ENCODE measurements at regions of chr20 and their contacts with region 1.

Region 1: GRCh38 chr20:6767536-6768227 is at the start of gene BMP2:
- DNase-seq: peak; percentile 69
- H3K4me3 ChIP-seq: peak within 1 kb of the TSS; percentile 78 to 93 (median 78)
- H3K27ac ChIP-seq: peak within 1 kb of the TSS; percentile 56
- H3K4me1 ChIP-seq: peaks cover 11% of the 10 kb centered on the region
- H3K27me3 ChIP-seq: no peaks in the 10 kb centered on the region
- CTCF ChIP-seq: no peak
- total RNA-seq, gene BMP2: 2.0 to 11.8 TPM

Region 2: GRCh38 chr20:5779071-5779900 is 988.4 kb before region 1 on chr20:
- CTCF ChIA-PET with region 1: no interaction called
- dilution Hi-C with region 1: no loop called
- in situ Hi-C with region 1: no loop called
- intact Hi-C with region 1: loop called (anchors 10 kb)
- DNase-seq: peak; percentile 44
- H3K4me3 ChIP-seq: no peak overlapping the region
- H3K27ac ChIP-seq: no peak overlapping the region
- H3K4me1 ChIP-seq: no peaks in the 10 kb centered on the region
- H3K27me3 ChIP-seq: no peaks in the 10 kb centered on the region
- CTCF ChIP-seq: no peak

Region 3: GRCh38 chr20:6178537-6178936 is 589.1 kb before region 1 on chr20:
- CTCF ChIA-PET with region 1: no interaction called
- dilution Hi-C with region 1: no loop called
- in situ Hi-C with region 1: no loop called
- intact Hi-C with region 1: loop called (anchors 10 kb)
- DNase-seq: peak; percentile 32
- H3K4me3 ChIP-seq: no peak overlapping the region
- H3K27ac ChIP-seq: no peak overlapping the region
- H3K4me1 ChIP-seq: no peaks in the 10 kb centered on the region
- H3K27me3 ChIP-seq: peaks cover 3% of the 10 kb centered on the region
- CTCF ChIP-seq: peak; percentile 36 to 64

Region 4: DNA sequence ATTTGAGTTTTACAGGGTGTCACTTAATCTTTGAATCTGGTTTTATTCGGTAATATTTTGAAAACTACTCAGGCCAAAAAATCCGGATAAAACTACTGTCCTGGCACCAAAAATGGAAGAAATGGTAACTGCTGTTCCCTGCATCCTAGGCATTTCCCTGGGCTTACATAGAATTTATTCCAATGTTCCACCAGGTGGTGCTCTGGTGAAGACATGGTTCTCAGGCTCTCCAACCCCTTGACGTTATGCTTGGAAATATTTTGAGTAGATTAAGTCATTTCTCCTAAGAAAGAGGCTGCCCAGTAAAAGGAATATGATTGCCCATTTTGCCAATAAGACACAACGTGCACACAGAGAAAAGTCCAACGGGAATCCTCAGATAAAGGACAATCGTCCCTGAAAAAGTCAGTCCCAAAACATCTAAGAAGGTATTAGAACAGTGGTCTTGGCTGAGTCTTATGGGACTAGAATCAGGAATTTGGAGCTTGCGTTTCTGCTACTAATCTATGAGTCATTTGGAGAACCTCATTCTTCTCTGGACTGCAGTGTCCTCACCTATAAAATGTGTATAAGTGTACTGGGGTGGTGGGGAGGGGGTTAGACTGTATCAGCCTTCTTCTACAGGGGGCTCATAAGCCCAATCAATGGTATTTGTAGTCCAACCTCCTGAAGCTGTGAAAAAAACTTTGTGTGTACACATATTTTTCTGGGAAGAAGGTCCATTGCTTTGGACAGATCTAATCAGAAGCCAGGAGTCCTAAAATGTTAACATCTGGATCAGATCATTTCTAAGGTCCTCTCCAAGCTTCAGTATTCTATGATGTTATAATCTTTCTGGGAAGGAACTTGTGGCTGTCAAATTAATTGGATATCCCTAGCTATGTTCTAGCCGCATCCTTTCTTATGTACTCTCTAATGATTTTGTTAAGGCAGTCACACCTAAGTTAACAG is 131.2 kb before region 1 on chr20:
- CTCF ChIA-PET with region 1: no interaction called
- dilution Hi-C with region 1: no loop called
- in situ Hi-C with region 1: loop called in 1 of 2 experiments (anchors 10 kb)
- intact Hi-C with region 1: loop called (anchors 1 kb)
- DNase-seq: peak; percentile 64
- H3K4me3 ChIP-seq: no peak overlapping the region
- H3K27ac ChIP-seq: no peak overlapping the region
- H3K4me1 ChIP-seq: peaks cover 16% of the 10 kb centered on the region
- H3K27me3 ChIP-seq: no peaks in the 10 kb centered on the region
- CTCF ChIP-seq: peak; percentile 65 to 74

Region 5: GRCh38 chr20:7094438-7094997 is 326.8 kb after region 1 on chr20:
- CTCF ChIA-PET with region 1: no interaction called
- dilution Hi-C with region 1: no loop called
- in situ Hi-C with region 1: no loop called
- intact Hi-C with region 1: loop called (anchors 1 kb)
- DNase-seq: peak; percentile 62
- H3K4me3 ChIP-seq: no peak overlapping the region
- H3K27ac ChIP-seq: no peak overlapping the region
- H3K4me1 ChIP-seq: no peaks in the 10 kb centered on the region
- H3K27me3 ChIP-seq: no peaks in the 10 kb centered on the region
- CTCF ChIP-seq: peak; percentile 69 to 77

Region 6: DNA sequence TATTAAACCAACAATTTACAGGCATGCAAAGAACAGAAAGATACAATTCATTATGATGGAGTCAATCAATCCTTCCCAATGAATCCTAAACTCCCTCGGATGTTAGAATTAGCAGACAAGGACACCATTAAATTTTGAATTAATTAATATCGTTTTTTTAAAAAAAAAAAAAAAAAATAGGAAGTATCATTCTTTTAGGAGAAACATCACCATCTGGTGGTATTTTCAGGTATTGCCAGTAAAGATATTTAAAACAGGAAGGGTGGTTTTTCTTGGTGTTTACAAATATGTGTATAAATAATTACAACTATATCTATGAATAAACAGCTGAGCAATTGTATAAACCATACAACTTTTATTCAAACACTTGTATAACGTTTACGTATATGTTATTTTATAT is 608.2 kb after region 1 on chr20:
- CTCF ChIA-PET with region 1: no interaction called
- dilution Hi-C with region 1: no loop called
- in situ Hi-C with region 1: no loop called
- intact Hi-C with region 1: loop called (anchors 5 kb)
- DNase-seq: no peak
- H3K4me3 ChIP-seq: no peak overlapping the region
- H3K27ac ChIP-seq: no peak overlapping the region
- H3K4me1 ChIP-seq: peaks cover 13% of the 10 kb centered on the region
- H3K27me3 ChIP-seq: no peaks in the 10 kb centered on the region
- CTCF ChIP-seq: peak; percentile 53 to 55